Esophagus muscularis mucosa (tissue), 4 donors: ENCODE measurements at regions of chrX and their contacts with region 1.

Region 1: DNA sequence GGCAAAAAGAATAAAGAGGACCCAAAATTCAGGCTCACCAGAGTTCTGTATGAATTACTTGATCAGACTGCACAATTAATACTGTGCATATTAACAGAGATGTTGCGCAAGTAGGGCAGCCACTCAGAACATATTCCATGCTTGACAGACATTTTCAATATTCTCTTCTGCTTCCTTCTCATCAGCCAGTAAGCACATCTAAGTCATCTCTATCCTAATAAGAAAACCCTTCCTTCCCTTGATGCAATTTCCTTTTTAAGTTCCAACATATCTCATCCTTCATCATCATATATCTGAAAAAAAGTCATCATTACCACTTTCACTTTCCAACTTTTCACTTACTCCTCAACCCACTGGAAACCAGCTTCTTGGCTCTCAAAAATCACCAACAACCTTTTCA is 14.3 kb downstream of the MBNL3 start:
- DNase-seq: no peak
- H3K4me3 ChIP-seq: no peak overlapping the region
- H3K27ac ChIP-seq: no peak overlapping the region
- H3K4me1 ChIP-seq: no peaks in the 10 kb centered on the region
- H3K27me3 ChIP-seq: no peaks in the 10 kb centered on the region
- CTCF ChIP-seq: no peak
- EP300 ChIP-seq: no peak
- POLR2A ChIP-seq: no peak

Region 2: DNA sequence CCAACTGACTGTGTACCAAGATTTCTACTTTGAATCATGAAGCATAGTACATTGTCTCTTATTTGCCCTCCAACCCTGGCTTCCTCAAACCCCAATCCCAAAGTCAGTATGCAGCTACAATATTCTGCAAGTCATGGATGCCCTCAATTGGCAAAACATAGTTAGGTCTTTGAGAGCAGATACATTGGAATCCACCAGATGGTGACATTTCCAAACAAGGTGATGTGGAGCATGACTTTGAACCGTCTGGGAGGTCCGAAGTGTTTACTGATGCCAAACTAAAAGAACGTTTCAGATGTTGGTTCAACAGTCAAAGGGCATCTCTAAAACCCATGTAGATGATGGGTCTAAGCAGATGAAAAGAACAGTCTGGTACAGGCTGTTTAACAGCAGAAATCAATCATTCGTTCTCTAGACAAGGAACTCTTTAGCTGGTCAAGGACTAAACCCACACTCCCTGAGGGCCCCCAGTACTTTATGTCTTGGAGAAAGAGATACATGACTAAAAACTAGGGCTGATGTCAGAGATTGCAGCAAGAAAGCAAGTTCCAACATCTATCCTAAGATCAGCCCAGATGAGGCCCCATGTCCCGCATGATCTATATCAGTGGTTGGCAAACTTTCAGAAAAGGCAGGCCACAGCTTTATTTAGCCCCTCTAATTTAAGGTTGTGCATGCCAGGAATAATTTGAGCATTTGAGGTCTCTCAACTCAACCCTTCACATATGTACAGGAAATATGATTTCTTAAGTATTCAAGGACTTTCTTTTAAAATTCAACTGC is 302.9 kb before region 1 on chrX:
- intact Hi-C with region 1: no loop called
- DNase-seq: no peak
- H3K4me3 ChIP-seq: no peak overlapping the region
- H3K27ac ChIP-seq: no peak overlapping the region
- H3K4me1 ChIP-seq: no peaks in the 10 kb centered on the region
- H3K27me3 ChIP-seq: no peaks in the 10 kb centered on the region
- CTCF ChIP-seq: no peak
- EP300 ChIP-seq: no peak
- POLR2A ChIP-seq: no peak

Region 3: DNA sequence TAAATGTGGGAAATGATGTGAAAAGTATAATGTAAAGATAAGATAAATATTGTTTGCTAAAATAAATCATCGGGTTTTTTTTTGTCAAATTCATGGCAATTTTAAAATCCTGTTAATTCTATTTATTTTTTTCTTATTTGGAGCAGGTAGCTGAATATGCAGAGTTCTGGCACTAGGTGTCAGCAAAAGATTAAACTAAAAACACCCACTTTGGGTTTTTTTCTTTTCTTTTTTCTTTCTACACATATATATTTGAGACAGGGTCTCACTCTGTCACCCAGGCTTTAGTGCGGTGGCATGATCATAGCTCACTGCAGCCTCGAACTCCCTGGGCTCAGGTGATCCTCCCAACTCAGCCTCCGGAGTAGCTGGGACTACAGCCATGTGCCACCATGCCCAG is 248.4 kb before region 1 on chrX:
- intact Hi-C with region 1: loop called (anchors 10 kb)
- DNase-seq: no peak
- H3K4me3 ChIP-seq: no peak overlapping the region
- H3K27ac ChIP-seq: no peak overlapping the region
- H3K4me1 ChIP-seq: no peaks in the 10 kb centered on the region
- H3K27me3 ChIP-seq: no peaks in the 10 kb centered on the region
- CTCF ChIP-seq: peak; percentile 23 to 29 (median 25)
- EP300 ChIP-seq: no peak
- POLR2A ChIP-seq: no peak

Region 4: GRCh38 chrX:132583296-132583695 is 108.8 kb after region 1 on chrX:
- intact Hi-C with region 1: no loop called
- DNase-seq: no peak
- H3K4me3 ChIP-seq: no peak overlapping the region
- H3K27ac ChIP-seq: no peak overlapping the region
- H3K4me1 ChIP-seq: no peaks in the 10 kb centered on the region
- H3K27me3 ChIP-seq: no peaks in the 10 kb centered on the region
- CTCF ChIP-seq: no peak
- EP300 ChIP-seq: no peak
- POLR2A ChIP-seq: no peak